ENCODE measurements at regions of chr10 and their contacts with region 1.

Region 1: DNA sequence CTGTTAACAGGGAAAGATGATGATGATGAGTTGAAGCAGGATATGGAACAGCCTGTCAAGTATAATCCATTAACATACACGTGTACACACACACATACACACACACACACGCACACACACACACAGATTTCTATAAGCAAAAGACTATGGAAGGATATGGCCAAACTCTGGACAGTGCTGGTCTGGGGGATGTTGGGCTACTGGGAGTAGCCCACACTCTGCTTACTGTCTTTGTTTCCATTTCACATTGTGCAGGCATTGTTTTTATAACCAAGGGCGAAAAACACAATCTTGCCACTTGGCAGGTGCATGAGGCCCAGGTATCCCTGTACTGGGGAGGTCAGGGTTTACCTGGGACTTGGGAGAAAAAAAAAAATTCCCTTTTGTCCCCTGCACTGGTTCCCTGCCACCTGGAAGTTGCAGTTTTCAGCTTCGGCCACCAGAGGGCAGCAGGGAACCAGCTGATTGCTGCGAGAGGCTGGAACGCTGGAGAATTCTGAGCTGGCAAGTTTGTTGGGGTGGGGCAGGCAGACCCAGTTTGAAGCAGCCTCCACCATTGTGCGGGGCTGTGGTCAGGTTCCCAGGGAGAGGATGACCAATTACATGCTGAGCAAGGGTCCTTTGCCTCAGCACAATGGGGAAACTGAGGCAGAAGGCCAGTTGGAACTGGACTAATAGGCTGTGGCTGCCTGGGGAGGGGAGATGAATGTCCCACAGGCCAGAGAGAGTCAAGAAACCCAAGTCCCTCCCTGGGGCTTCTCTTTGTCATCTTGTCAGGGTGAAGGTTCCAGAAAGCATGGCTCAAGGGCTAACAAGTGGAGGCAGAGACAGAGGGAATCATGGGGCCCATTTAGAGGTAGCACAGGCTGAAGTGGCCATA is 27.3 kb downstream of the PPIF start:
- DNase-seq: peak; percentile 78 to 88 (median 86)
- ATAC-seq: peak; percentile 92
- H3K4me3 ChIP-seq: no peak overlapping the region
- H3K4me1 ChIP-seq: no peaks in the 10 kb centered on the region
- CTCF ChIP-seq: peak; percentile 94

Region 2: DNA sequence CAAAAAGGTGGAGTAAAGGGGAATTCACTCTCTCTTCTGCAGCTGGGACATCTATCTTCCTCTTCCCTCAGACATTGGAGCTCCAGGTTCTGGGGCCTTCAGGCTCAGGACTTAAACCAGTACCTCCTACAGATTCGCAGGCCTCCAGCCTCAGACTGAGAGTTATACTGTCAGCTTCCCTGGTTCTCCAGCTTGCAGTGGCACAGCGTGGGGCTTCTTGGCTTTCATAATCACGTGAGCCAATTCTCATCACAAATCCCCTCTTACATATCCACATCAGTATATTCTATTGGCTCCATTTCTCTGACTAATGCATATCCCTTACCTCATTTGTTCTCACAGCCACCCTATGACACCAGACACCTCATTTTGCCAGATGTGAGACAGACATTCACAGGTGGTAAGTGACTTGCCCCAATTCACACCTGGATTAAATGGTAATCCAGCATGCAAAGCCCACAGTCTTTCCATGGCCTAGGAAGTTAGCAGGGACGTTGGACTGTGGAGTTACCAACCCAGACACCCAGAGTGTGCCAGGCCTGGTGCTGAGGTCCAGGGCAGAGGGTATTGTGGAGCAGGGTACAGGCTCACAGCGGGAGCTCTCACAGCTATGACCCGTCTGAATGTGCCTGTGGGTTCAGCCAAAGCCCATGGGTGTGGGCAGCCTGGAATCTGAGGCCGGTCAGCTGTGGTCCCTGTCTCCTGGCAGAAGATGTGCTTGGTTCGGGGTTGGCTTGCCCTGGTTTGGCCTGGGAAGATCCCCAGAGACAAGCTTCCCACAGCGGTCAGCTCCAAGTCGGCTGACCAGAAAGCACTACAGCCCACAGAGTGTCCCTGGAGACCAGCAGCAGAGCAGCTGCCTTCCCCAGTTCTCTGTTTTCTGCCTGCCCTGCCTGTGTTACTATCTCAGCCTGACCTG is 89.3 kb after region 1 on chr10:
- intact Hi-C with region 1: loop called (anchors 5 to 10 kb)
- DNase-seq: peak in 1 of 3 donors; percentile 57
- ATAC-seq: peak; percentile 21
- H3K4me3 ChIP-seq: no peak overlapping the region
- H3K4me1 ChIP-seq: no peaks in the 10 kb centered on the region
- CTCF ChIP-seq: no peak

Region 3: DNA sequence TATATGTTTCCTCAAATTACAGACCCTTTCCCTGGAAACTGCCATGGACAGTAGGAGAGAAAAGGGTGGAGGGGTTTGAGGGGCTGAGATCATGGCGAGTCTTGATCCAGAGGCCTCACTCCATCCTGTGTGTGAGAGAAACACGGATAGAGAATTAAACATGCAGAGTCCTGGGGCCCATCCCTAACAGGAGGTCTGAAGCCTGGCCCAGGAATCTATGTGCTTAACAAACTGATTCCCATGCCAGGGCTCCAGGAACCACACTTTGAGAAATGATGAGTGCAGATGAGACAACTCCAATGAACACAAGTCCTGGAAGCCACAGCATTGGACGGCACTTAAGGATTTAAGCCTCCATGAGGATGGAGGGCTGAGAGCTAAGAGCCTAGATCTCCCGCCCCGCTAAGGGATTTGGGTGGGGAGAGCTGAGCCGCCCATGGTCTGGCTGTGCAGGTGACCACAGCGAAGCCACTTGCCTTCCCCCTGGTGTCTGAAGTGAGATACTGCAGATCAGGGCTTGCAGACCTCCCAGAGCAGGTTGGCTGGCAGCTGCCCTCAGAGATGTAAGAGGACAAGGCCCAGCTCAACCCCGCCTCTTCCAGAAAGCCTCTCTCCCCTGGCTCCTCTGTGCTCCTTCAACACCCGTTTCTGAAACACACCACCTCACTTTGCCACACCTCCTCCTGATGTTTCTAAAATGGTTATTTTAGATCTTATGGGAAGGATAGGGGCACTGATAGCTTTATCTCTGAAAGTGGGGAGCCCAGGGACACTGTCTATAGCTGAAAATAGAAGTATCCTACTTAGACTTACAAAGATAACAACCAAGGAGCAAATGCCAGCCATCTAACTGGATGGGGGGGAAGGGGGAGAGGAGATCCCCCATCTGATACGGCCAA is 113.0 kb after region 1 on chr10:
- intact Hi-C with region 1: loop called in 1 of 2 experiments (anchors 5 kb)
- DNase-seq: peak; percentile 39 to 61 (median 57)
- ATAC-seq: peak; percentile 76
- H3K4me3 ChIP-seq: no peak overlapping the region
- H3K4me1 ChIP-seq: no peaks in the 10 kb centered on the region
- CTCF ChIP-seq: peak; percentile 48